ENCODE measurements at regions of chr16 and their contacts with region 1.

Region 1: GRCh38 chr16:29900102-29900887 is at the start of gene ASPHD1:
- DNase-seq: peak; percentile 92

Region 2: GRCh38 chr16:29848420-29849297 is 51.6 kb before region 1 on chr16:
- CTCF ChIA-PET with region 1: interaction called, 10 read pairs
- POLR2A ChIA-PET with region 1: no interaction called
- DNase-seq: peak; percentile 93

Region 3: DNA sequence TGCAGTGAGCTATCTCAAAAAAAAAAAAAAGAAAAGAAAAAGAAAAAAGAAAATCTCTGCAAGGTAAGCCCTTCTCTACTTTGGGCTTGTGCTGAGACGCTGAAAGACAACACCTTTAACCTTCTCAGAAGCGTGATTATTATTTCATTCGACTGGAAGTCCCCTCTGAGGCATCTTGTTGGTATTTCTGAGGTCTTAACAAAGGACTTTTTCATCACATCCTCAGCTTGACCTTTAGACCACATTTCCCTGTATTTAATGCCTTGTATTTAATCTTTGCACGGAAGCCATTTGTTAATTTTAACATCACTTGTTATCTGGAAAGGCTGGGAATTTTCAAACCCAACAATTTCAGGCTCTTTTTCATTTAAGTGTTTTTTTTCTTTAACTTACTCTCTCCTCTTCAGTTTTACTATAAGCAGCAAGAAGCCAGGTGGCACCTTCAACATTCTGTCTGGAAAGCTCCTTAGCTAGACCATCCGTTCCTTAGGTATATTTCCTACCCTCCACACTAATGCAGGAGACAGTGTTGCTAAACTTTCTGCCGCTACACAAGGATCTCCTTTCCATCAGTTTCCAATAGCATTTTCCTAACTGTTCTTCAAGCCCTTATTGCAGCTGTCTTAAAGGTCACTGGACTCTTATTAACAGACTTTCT is 15.4 kb after region 1 on chr16:
- CTCF ChIA-PET with region 1: interaction called, 4 read pairs
- POLR2A ChIA-PET with region 1: interaction called, 11 read pairs
- DNase-seq: no peak

Region 4: DNA sequence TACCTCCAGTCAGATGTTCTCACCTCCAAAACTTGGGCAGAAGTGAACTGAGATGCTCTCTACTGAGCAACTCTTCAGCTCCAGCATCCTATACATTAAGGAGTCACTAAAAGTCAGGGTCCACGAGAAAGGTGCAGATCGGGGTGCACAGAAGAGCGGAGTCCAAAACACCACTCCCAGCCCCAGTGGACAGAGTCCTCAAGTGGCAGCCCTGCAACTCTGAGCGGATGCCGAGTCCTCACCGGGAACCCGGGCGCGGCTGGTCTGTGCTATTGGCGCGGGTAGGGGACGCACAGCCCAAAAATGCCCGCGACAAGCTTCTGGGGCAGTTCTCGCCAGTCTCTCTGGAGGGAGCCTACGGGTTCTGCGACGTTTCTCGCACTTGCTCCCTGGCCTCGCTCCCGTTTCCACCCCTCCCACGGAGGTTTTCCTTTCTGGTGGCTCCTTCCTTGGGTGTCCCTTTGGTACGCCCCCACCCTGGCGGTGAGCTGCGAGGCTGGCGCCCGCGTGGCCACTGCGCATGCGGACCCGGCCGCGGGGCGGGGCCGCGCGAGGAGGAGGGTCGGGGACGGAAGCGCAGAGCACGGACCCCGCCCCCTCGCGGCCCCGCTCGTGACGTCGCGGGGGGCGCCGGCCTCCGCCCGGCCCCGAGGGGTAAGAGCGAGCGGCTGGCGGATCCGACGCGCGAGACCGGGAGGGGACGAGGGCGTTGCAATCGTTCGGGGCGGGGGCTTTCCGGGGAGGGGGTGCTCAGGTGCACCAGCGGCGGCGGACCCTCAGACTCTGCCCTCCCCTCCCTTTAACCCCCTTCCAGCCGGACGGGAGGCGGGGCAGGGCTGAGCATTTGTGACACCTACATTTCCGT is 61.4 kb after region 1 on chr16 and contains the start of gene TMEM219:
- CTCF ChIA-PET with region 1: interaction called, 4 read pairs
- POLR2A ChIA-PET with region 1: interaction called, 17 read pairs
- DNase-seq: peak; percentile 100

Region 5: DNA sequence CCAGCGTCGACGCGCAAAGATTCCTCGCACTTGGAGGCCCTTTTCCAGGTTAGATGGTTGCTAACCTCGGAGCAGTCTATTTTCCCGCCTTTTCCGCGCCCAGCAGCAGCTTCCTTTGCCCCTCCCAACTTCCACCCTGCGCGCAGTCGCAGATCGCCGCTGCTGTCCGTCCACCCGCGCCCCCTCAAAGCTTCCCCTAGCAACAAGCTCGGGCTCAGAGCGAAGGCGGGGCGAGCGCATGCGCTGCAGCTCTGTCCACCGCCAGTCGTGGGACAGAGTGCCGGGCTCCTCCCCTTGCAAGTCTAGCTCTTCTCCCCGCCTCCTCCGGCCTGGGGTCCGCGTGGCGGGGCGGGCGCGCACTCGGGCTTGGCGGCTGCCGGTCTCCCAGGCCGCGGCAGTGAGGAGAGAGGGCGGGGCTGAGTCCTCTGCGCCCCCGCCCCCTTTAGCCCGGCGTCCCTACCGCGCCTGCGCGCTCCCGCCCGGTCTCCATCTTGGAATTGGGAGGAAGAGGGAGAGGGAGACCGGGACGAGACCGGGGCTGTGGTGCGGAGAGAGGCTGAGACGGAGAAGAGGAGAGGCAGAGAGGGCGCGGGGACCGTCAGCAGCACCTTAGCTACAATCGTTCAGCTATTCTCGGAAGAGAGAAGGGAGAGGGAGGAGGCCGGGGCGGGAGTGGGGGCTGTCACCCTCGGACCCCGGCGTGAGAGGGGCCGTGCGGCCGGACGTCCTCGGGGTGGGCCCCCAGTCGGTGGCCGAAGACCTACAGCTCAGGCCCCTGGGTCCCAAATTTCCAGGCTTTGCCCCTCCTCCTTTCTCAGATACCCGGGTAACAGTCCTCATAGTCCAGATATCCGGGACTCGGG is 73.3 kb after region 1 on chr16 and contains the start of gene TAOK2:
- CTCF ChIA-PET with region 1: no interaction called
- POLR2A ChIA-PET with region 1: interaction called, 15 read pairs
- DNase-seq: peak; percentile 100

Region 6: GRCh38 chr16:30046184-30046583 is 145.9 kb after region 1 on chr16:
- CTCF ChIA-PET with region 1: no interaction called
- POLR2A ChIA-PET with region 1: no interaction called
- DNase-seq: no peak